ENCODE measurements at regions of chr1 and their contacts with region 1.

Region 1: DNA sequence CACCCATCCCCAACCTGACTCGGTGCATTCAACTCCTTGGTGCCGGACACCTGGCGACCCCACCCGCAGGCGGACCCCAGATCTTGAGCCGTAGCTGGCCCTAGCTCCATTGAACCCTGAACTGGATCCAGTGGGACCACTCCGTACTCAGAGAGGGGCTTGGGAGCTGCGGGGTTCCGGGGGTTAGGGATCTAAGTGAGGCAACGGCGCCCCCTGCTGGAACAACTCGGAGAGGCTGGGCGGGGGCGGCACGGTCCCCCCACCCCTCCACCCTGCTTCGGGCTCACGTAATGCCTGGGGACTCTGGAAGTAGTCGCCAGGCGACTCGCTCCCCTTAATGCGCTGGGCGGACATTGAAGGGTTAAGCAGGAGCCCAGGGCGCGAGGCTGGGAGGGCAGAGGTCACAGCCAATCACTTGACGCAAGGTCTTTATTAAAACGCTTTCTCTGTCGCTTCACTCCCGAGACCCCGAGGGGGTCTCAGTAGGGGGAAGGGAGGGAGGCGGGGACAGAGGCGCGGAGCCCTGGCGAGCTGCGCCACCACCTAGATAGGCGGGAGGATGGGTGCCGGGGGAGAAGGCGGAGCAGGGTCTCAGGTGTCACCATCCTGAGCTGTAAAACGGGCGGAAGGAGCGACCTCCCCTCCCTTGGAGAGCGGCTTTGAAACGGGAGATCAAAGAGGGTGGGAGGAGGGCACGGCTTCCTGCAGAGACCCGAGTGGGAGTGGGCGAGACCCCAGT is 704 bp upstream of the CRABP2 start:
- DNase-seq: peak in 1 of 2 experiments; percentile 86
- H3K4me3 ChIP-seq: peak overlapping the region; percentile 79
- H3K27ac ChIP-seq: 0 out of 2 replicates have a peak overlapping the region, but pooled peaks have one; percentile 55
- H3K4me1 ChIP-seq: peaks cover 47% of the 10 kb centered on the region
- H3K27me3 ChIP-seq: no peaks in the 10 kb centered on the region
- CTCF ChIP-seq: peak; percentile 98

Region 2: GRCh38 chr1:156045076-156045475 is 661.0 kb before region 1 on chr1:
- CTCF ChIA-PET with region 1: no interaction called
- POLR2A ChIA-PET with region 1: no interaction called
- intact Hi-C with region 1: no loop called
- DNase-seq: no peak
- H3K4me3 ChIP-seq: no peak overlapping the region
- H3K27ac ChIP-seq: no peak overlapping the region
- H3K4me1 ChIP-seq: peaks cover 17% of the 10 kb centered on the region
- H3K27me3 ChIP-seq: no peaks in the 10 kb centered on the region
- CTCF ChIP-seq: no peak

Region 3: DNA sequence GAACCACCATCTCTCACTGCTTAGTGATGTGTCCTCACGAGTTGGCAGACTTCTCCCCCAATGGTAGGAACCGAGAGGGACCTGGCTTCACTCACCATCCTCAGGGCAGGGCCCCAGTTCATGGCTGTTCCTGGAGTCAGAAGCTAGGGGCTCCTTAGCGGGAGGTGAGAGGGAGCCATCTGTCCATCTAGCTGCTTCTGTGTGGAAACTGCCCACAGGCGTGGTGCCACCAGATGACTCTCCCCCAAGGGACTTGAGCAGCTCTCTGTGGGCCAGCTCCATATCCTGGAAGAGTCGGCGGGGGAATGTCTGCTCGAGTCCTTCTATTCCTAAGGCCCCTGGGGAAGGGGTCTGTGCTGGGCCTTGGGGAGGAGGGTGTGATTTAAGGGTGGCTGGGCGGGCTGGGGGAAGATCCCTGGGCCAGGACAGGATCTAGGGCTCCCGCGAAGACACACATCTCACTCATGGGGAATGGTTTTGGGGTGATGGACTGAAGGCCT is 230.7 kb after region 1 on chr1:
- CTCF ChIA-PET with region 1: no interaction called
- POLR2A ChIA-PET with region 1: interaction called, 20 read pairs
- intact Hi-C with region 1: no loop called
- DNase-seq: no peak
- H3K4me3 ChIP-seq: no peak overlapping the region
- H3K27ac ChIP-seq: no peak overlapping the region
- H3K4me1 ChIP-seq: no peaks in the 10 kb centered on the region
- H3K27me3 ChIP-seq: no peaks in the 10 kb centered on the region
- CTCF ChIP-seq: no peak

Measured in PC-9 (cell line).